A549 (cell line): ENCODE measurements at regions of chr10 and their contacts with region 1.

Region 1: DNA sequence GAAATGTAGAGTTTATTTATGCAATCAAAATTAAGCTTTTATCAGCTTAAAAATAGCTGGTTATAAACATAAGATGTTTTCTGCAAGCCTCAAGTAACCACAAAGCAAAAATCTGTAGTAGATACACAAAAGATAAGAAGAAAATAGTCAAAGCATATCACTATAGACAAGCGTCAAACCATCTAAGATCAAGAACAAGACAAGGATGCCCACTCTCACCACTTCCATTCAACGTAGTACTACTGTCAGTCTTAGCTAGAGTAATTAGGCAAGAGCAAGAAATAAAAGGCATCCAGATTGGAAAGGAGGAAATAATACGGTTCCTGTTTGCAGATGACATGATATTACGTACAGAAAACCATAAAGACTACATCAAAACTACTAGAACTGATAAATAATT is 17.5 kb upstream of the CYP2E1 start:
- DNase-seq: no peak
- ATAC-seq: no peak
- H3K4me3 ChIP-seq: no peak overlapping the region
- H3K27ac ChIP-seq: no peak overlapping the region
- H3K4me1 ChIP-seq: no peaks in the 10 kb centered on the region
- CTCF ChIP-seq: no peak
- EP300 ChIP-seq: no peak
- POLR2A ChIP-seq: no peak
- RAD21 ChIP-seq: no peak

Region 2: DNA sequence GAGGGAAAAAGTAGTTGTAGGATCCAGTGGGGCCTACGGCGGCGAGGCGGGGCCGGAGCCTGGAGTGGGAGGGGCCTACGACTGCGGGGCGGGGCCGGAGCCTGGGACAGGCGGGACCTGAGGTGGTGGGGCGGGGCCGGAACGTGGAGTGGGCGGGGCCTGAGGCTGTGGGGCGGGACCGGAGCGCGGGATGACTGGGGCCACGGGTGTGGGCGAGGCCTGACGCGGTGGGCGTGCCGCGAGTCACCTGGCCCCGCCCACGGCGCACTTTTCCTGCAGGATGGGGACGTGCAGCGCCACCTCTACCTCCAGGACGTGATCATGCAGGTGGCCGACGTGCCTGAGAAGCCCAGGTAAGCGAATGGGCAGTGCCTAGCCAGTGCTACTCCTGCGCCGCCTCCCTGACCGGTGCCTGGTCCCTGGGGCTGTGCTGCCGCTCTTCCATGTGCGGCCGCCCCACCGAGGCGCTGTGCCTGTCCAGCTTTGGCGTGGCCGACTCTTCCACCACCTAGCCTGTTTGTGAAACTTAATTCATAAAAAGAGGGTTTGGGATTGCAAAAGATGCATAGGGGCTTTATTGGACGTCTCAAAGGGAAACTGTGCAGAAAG is 200.5 kb before region 1 on chr10:
- CTCF ChIA-PET with region 1: no interaction called
- POLR2A ChIA-PET with region 1: no interaction called
- DNase-seq: peak; percentile 53 to 95
- ATAC-seq: peak; percentile 46 to 83
- H3K4me3 ChIP-seq: peak overlapping the region; percentile 94
- H3K27ac ChIP-seq: peak overlapping the region; percentile 92 to 97
- H3K4me1 ChIP-seq: peaks cover 17% of the 10 kb centered on the region
- CTCF ChIP-seq: no peak
- EP300 ChIP-seq: no peak
- POLR2A ChIP-seq: no peak
- RAD21 ChIP-seq: no peak

Region 3: GRCh38 chr10:133520155-133520738 is 10.5 kb after region 1 on chr10:
- CTCF ChIA-PET with region 1: interaction called, 14 read pairs
- POLR2A ChIA-PET with region 1: no interaction called
- DNase-seq: peak; percentile 79 to 91
- ATAC-seq: peak; percentile 100
- H3K4me3 ChIP-seq: peak overlapping the region; percentile 49
- H3K27ac ChIP-seq: peak overlapping the region; percentile 71 to 80
- H3K4me1 ChIP-seq: 0 out of 3 replicates have a peak, but pooled peaks cover 3% of the 10 kb centered on the region
- CTCF ChIP-seq: peak; percentile 96
- EP300 ChIP-seq: no peak
- POLR2A ChIP-seq: peak; percentile 82
- RAD21 ChIP-seq: peak; percentile 44 to 59